ENCODE measurements at regions of chr22 and their contacts with region 1.

Region 1: DNA sequence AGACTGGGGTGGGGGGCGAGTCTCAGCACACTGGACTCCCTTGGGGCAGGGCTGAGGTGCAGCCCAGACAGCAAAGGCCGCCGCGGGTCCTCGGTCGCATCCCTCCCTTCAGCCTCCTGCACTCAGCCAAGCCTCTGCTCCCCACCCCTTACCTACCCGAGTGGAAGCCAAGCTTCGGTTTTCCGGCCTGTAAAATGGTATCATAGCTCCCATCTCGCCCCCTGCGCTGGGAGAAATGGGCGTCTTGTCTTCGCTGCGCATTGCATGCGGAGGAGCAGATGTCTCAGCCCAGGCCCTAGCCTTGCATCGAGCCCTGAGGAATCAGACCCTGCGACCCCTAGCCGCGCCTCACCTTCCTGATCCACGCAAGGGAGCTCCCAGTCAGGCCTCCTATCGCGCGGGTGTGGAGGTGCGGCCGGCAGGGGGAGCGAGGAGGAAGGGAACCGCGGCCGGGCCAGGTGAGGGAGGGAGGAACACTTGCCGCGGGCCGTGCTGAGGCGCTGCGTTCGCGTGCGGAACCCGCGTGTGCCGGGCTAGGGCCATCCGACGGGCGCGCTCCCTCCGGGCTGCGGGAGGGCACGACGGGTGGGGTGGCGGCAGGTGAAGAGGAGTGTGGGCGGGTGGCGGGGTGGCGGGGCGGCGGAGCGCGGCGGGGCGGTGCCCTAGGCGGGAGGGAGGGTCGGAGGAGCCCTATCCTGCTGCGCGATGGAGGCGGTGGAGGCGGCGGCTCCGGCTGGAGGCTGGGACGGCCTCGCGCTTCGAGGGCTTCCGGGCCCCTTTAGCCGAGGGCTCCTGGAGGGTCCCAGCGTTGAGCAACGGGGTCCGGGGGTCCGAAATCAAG is 4.1 kb upstream of the TBX1 start:
- DNase-seq: peak; percentile 48
- H3K4me3 ChIP-seq: peak overlapping the region in 2 of 3 experiments; percentile 27 to 32
- H3K27ac ChIP-seq: no peak overlapping the region
- H3K4me1 ChIP-seq: peaks cover 16% of the 10 kb centered on the region
- H3K27me3 ChIP-seq: peaks cover 31% of the 10 kb centered on the region
- CTCF ChIP-seq: peak; percentile 44 to 75

Region 2: DNA sequence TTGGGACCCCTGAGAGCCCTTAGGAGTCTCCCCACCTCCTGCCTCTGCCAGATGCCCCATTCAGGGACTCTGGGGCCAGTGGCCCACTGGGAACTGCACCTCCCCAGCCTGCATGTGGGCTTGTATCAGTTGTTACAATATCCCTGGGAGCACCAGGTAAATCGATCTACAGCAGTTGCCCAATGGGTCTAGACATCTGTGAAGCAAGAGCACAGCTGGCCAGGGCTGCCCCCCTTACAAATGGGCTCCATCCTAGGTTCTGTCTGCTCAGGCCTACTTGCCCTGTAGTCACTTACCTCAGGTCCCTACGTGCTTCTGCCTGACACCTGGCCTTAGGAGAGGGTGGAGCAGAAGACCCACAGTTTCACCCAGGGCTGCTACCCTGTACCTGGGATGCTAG is 387.6 kb before region 1 on chr22:
- CTCF ChIA-PET with region 1: no interaction called
- dilution Hi-C with region 1: no loop called
- in situ Hi-C with region 1: no loop called
- intact Hi-C with region 1: no loop called
- DNase-seq: no peak
- H3K4me3 ChIP-seq: no peak overlapping the region
- H3K27ac ChIP-seq: no peak overlapping the region
- H3K4me1 ChIP-seq: no peaks in the 10 kb centered on the region
- H3K27me3 ChIP-seq: no peaks in the 10 kb centered on the region
- CTCF ChIP-seq: no peak

Region 3: GRCh38 chr22:19679522-19680101 is 76.9 kb before region 1 on chr22:
- CTCF ChIA-PET with region 1: no interaction called
- dilution Hi-C with region 1: no loop called
- in situ Hi-C with region 1: no loop called
- intact Hi-C with region 1: no loop called
- DNase-seq: no peak
- H3K4me3 ChIP-seq: no peak overlapping the region
- H3K27ac ChIP-seq: no peak overlapping the region
- H3K4me1 ChIP-seq: no peaks in the 10 kb centered on the region
- H3K27me3 ChIP-seq: no peaks in the 10 kb centered on the region
- CTCF ChIP-seq: peak; percentile 66 to 96

Region 4: DNA sequence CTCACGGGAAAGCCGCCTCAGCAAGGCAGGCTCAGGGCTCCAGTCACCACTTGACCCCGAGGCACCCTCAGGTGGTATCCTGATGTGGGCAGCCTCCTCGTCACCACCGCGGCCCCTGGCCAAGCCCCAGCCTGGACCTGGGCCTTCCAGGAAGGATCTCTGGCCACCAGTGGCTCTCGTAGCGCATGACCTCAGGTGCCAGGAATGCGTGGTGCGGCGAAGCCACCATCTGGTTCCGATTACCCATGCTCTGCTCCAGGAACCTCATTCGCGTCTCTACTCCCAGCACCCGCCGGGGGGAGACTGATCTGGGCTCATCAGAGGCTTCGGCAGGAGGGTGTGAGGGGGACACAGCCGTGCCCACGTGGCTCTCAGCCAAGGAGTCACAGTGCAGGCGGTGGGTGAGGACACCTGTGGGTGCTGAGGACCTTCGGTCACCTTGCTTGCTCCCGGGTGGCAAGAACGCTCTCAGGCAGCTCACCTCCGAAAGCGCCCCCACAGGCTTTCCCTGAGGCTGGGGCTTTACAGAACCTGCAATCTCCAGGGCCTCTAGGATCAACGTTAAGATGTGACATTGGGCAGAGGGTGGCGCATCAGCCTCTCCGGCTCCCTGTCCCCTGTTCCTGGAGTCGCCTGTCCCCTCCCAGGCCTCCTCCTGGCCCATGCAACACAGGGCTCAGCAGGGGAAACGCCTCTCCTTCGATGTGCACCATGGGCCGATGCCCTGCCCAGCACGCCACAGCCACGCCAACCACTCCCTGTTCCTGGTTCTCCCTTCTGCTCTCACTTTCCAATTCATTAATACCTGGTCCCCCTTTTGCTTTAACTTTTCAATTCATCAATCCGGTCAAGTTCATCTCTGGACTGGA is 43.0 kb after region 1 on chr22:
- CTCF ChIA-PET with region 1: interaction called, 22 read pairs
- dilution Hi-C with region 1: no loop called
- in situ Hi-C with region 1: no loop called
- intact Hi-C with region 1: no loop called
- DNase-seq: no peak
- H3K4me3 ChIP-seq: no peak overlapping the region
- H3K27ac ChIP-seq: no peak overlapping the region
- H3K4me1 ChIP-seq: no peaks in the 10 kb centered on the region
- H3K27me3 ChIP-seq: no peaks in the 10 kb centered on the region
- CTCF ChIP-seq: no peak

Region 5: DNA sequence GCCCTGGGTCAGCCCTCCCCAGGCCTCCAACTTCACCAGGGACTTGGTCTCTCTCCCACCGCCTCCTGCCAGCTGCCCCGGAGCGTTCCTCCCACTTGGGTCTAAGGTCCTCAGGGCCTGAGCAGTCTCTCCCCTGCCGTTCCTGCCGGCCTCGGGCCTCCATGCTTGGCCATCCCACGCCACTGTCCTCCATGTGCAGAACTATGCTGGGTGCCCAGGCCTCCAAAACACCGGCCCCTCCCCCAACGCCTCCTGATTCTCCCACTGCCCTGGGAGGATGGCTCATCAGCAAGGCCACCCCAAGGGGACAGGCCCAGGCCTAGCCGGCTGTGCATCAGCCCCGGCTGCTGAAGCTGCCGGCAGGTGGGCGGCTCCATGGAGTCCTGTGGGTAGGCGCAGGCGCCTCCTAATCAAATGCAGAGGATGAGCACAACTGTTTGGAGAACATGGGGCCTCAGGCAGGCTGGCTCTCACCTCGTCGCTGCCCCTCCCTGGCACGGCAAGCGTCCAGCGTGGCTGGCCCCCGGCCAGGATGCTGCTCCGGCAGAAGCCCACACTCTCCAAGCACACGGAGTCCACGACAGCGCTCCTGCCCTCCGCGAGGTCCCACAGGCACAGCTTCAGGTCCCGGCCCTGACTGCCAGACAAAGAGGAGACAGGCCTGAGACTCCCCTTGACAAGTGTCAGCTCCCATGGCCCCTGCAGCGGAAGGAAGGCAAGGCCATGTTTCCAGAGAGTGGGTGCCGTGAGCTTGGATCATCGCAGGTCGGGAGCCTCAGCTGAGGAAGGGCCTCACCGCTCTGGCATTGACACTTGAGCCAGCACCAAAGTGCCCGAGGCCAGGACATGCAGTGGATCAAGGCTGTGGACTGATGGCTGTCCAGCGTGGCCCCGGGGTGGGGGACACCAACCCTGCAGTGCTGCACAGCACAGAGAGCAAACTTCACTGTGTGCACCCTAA is 55.6 kb after region 1 on chr22:
- CTCF ChIA-PET with region 1: interaction called, 10 read pairs
- dilution Hi-C with region 1: no loop called
- in situ Hi-C with region 1: loop called in 1 of 2 experiments (anchors 10 kb)
- intact Hi-C with region 1: no loop called
- DNase-seq: no peak
- H3K4me3 ChIP-seq: no peak overlapping the region
- H3K27ac ChIP-seq: no peak overlapping the region
- H3K4me1 ChIP-seq: peaks cover 23% of the 10 kb centered on the region
- H3K27me3 ChIP-seq: no peaks in the 10 kb centered on the region
- CTCF ChIP-seq: no peak

Region 6: GRCh38 chr22:19854778-19855503 is 98.4 kb after region 1 on chr22 and contains the starts of genes GNB1L and RTL10:
- CTCF ChIA-PET with region 1: no interaction called
- dilution Hi-C with region 1: no loop called
- in situ Hi-C with region 1: no loop called
- intact Hi-C with region 1: loop called (anchors 2 kb)
- DNase-seq: peak; percentile 96
- H3K4me3 ChIP-seq: peak within 1 kb of the TSS; percentile 85 to 94 (median 88)
- H3K27ac ChIP-seq: peak within 1 kb of the TSS; percentile 62
- H3K4me1 ChIP-seq: peaks cover 48% of the 10 kb centered on the region
- H3K27me3 ChIP-seq: no peaks in the 10 kb centered on the region
- CTCF ChIP-seq: no peak
- total RNA-seq, gene GNB1L: 3.8 to 7.8 TPM
- total RNA-seq, gene RTL10: 20.7 to 21.9 TPM

Region 7: DNA sequence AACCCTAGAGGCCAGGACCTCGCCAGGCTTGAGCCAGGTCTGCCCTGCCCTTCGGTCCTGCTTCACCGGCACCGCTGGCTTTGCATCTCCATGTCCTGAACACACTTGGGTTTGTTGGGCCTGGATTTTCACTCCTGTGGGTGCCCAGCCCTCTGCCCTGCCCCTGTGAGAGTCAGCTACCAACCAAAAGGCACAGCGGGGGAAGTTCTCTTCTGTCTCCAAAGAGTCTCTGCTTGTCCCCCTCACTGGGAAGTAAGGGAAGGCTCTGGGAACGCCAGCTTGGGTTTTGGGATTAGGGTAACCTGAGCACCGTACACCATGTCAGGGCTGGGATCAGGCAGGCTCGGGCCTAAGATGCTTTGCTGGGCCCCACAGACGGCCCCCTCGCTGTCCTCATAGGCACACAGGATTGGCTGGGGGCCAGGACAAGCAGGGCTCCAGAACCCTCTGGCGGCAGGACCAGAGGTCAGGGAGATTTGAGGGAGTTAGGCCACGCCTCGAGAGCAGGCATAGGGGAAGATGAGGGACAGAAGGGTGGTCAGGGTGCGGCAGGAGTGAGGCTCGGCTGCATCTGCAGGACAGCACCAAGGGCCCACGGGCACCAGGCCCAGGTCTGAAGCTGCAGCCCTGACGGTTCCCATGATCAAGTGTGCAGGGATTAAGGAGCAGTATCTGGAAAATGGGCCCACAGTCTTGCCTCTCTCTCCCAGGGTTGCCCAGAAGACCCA is 113.6 kb after region 1 on chr22:
- CTCF ChIA-PET with region 1: no interaction called
- dilution Hi-C with region 1: no loop called
- in situ Hi-C with region 1: no loop called
- intact Hi-C with region 1: no loop called
- DNase-seq: no peak
- H3K4me3 ChIP-seq: no peak overlapping the region
- H3K27ac ChIP-seq: no peak overlapping the region
- H3K4me1 ChIP-seq: peaks cover 36% of the 10 kb centered on the region
- H3K27me3 ChIP-seq: no peaks in the 10 kb centered on the region
- CTCF ChIP-seq: no peak

Region 8: DNA sequence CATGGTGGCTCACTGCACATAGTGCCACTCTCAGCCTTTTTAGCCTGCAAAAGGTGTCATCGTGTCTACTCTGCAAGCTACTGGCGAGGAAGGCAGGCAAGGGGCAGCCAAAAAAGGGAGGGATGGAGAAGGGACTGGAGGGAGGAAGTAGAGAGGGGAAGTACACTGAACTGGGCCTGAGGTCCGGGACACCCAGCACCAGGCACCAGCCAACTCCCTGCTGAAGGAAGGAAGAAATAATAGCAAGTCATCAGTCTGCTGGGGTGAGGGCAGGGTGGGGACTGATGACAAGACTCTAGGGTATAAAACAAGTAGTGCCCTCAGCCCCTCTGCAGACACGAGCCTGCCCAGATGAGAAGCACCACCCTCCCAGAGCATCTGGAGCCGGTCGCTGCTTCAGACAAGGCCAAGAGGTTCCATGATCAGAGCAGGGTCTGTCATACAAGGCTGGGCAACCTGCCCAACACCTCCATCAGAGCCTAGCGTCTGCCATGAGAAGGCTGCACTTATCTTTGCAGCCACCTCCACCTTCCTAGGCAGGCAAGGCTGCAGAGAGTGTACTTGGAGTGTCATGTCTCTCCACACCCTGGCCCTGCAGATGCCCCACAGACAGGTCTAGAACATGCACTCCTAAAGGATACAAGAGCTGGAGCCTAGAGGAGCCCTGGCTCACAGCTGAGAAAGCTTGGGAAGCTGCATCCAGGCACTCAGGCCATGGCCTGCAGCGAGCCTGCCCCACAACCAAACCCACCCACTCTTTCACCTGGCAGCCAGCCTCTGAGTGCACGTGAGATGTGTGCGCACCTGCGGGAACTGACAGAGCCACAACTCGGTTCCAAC is 176.1 kb after region 1 on chr22:
- CTCF ChIA-PET with region 1: no interaction called
- dilution Hi-C with region 1: loop called (anchors 5 kb)
- in situ Hi-C with region 1: no loop called
- intact Hi-C with region 1: no loop called
- DNase-seq: no peak
- H3K4me3 ChIP-seq: no peak overlapping the region
- H3K27ac ChIP-seq: no peak overlapping the region
- H3K4me1 ChIP-seq: no peaks in the 10 kb centered on the region
- H3K27me3 ChIP-seq: no peaks in the 10 kb centered on the region
- CTCF ChIP-seq: no peak

Measured in mammary epithelial cell (primary cell).